ENCODE measurements at regions of chr15 and their contacts with region 1.

Region 1: GRCh38 chr15:75201609-75202250 is at the start of gene C15orf39:
- DNase-seq: peak; percentile 79
- H3K4me3 Mint-ChIP-seq: peak within 1 kb of the TSS; percentile 92
- H3K27ac Mint-ChIP-seq: peak within 1 kb of the TSS; percentile 90
- H3K4me1 Mint-ChIP-seq: peaks cover 57% of the 10 kb centered on the region
- H3K27me3 Mint-ChIP-seq: no peaks in the 10 kb centered on the region
- total RNA-seq, gene C15orf39: 65.0 to 69.2 TPM

Region 2: GRCh38 chr15:75029378-75030022 is 172.2 kb before region 1 on chr15:
- CTCF ChIA-PET with region 1: interaction called, 53 read pairs
- POLR2A ChIA-PET with region 1: interaction called, 47 read pairs
- DNase-seq: peak; percentile 91
- H3K4me3 Mint-ChIP-seq: no peak overlapping the region
- H3K27ac Mint-ChIP-seq: peak overlapping the region; percentile 59
- H3K4me1 Mint-ChIP-seq: peaks cover 42% of the 10 kb centered on the region
- H3K27me3 Mint-ChIP-seq: no peaks in the 10 kb centered on the region

Region 3: GRCh38 chr15:75069301-75069925 is 132.3 kb before region 1 on chr15:
- CTCF ChIA-PET with region 1: interaction called, 16 read pairs
- POLR2A ChIA-PET with region 1: interaction called, 50 read pairs
- DNase-seq: no peak
- H3K4me3 Mint-ChIP-seq: no peak overlapping the region
- H3K27ac Mint-ChIP-seq: peak overlapping the region; percentile 95
- H3K4me1 Mint-ChIP-seq: peaks cover 78% of the 10 kb centered on the region
- H3K27me3 Mint-ChIP-seq: no peaks in the 10 kb centered on the region

Region 4: GRCh38 chr15:75171408-75171807 is 30.3 kb before region 1 on chr15:
- CTCF ChIA-PET with region 1: interaction called, 8 read pairs
- POLR2A ChIA-PET with region 1: interaction called, 11 read pairs
- DNase-seq: peak; percentile 73
- H3K4me3 Mint-ChIP-seq: no peak overlapping the region
- H3K27ac Mint-ChIP-seq: peak overlapping the region; percentile 61
- H3K4me1 Mint-ChIP-seq: peaks cover 59% of the 10 kb centered on the region
- H3K27me3 Mint-ChIP-seq: peaks cover 9% of the 10 kb centered on the region